ENCODE measurements at regions of chr10 and their contacts with region 1.

Region 1: DNA sequence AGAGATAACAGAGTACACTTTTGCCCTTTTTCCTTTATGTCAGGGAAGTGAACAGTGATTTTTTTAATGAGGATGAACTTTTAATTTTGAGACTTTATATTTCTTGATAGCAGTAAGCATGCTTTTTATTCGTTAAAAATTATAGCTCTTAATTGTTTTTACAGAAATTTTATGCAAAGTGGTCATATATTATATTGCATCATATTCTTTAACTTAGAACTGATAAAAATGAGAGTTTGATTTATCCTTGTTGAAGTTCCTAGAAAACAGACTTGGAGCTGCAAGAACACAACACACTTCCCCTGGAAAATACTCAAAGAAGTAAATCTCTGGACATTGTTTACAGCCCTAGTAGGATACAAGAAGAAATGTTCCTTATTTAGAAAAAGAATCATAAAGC is 21.2 kb upstream of the MINDY3 start:
- H3K4me3 ChIP-seq: no peak overlapping the region
- H3K27ac ChIP-seq: no peak overlapping the region
- H3K4me1 ChIP-seq: peaks cover 3% of the 10 kb centered on the region
- CTCF ChIP-seq: no peak

Region 2: GRCh38 chr10:16439295-16439694 is 557.8 kb after region 1 on chr10:
- CTCF ChIA-PET with region 1: no interaction called
- POLR2A ChIA-PET with region 1: interaction called, 10 read pairs
- H3K4me3 ChIP-seq: no peak overlapping the region
- H3K27ac ChIP-seq: no peak overlapping the region
- H3K4me1 ChIP-seq: peaks cover 2% of the 10 kb centered on the region; the same call in 1 of the 2 replicates
- CTCF ChIP-seq: no peak

Measured in HEK293 (cell line).